CD8-positive, alpha-beta T cell (primary cell): ENCODE measurements at regions of chr3 and their contacts with region 1.

Region 1: GRCh38 chr3:21587894-21588293 is 163.1 kb downstream of the ZNF385D start:
- DNase-seq: no peak
- ATAC-seq: no peak
- H3K4me3 ChIP-seq: no peak overlapping the region
- H3K4me3 Mint-ChIP-seq: no peak overlapping the region
- H3K27ac ChIP-seq: no peak overlapping the region
- H3K27ac Mint-ChIP-seq: no peak overlapping the region
- H3K4me1 ChIP-seq: no peaks in the 10 kb centered on the region
- H3K4me1 Mint-ChIP-seq: no peaks in the 10 kb centered on the region
- H3K27me3 ChIP-seq: no peaks in the 10 kb centered on the region
- H3K27me3 Mint-ChIP-seq: no peaks in the 10 kb centered on the region
- CTCF ChIP-seq: no peak

Region 2: DNA sequence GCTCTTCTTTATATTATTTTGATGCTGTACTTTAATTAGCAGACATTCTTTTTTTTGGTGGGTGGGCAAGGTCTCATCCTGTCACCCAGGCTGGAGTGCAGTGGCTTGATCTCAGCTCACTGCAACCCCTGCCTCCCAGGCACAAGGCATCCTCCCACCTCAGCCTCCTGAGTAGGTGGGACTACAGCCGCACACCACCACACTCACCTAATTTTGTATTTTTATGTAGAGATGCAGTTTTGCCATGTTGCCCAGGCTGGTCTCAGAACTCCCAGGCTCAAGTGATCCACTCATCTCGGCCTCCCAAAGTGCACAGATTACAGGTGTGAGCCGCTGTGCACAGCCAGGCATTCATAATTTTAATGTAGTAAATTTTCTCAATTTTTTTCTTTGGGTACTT is 444.9 kb before region 1 on chr3:
- CTCF ChIA-PET with region 1: no interaction called
- POLR2A ChIA-PET with region 1: no interaction called
- intact Hi-C with region 1: loop called in 1 of 2 experiments (anchors 5 kb)
- DNase-seq: no peak
- ATAC-seq: no peak
- H3K4me3 ChIP-seq: no peak overlapping the region
- H3K4me3 Mint-ChIP-seq: no peak overlapping the region
- H3K27ac ChIP-seq: no peak overlapping the region
- H3K27ac Mint-ChIP-seq: no peak overlapping the region
- H3K4me1 ChIP-seq: no peaks in the 10 kb centered on the region
- H3K4me1 Mint-ChIP-seq: no peaks in the 10 kb centered on the region
- H3K27me3 ChIP-seq: no peaks in the 10 kb centered on the region
- H3K27me3 Mint-ChIP-seq: no peaks in the 10 kb centered on the region
- CTCF ChIP-seq: no peak

Region 3: DNA sequence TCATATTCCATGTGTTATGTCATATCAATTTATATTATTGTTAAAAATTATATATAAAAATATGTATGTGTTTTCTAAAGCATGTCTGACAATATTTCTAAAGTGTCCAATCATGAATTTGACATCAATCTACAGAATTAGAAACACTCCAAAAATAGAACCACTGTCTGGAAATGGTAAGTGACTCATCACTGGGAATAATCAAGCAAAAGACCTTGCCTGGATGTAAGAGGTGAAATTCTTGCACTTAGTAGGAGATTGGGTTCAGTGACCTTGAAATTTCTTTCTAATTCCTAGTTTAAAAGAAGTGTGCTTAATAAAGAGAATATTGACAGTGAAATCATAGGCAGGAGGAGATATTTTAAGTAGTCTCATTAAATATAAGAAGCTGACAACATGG is 25.7 kb before region 1 on chr3:
- CTCF ChIA-PET with region 1: no interaction called
- POLR2A ChIA-PET with region 1: no interaction called
- intact Hi-C with region 1: no loop called
- DNase-seq: no peak
- ATAC-seq: no peak
- H3K4me3 ChIP-seq: no peak overlapping the region
- H3K4me3 Mint-ChIP-seq: no peak overlapping the region
- H3K27ac ChIP-seq: no peak overlapping the region
- H3K27ac Mint-ChIP-seq: no peak overlapping the region
- H3K4me1 ChIP-seq: no peaks in the 10 kb centered on the region
- H3K4me1 Mint-ChIP-seq: no peaks in the 10 kb centered on the region
- H3K27me3 ChIP-seq: no peaks in the 10 kb centered on the region
- H3K27me3 Mint-ChIP-seq: no peaks in the 10 kb centered on the region
- CTCF ChIP-seq: no peak